ENCODE measurements at regions of chr11 and their contacts with region 1.

Region 1: GRCh38 chr11:19071255-19071654 is 10.7 kb upstream of the MRGPRX2 start:
- DNase-seq: peak; percentile 86
- H3K4me3 Mint-ChIP-seq: peak overlapping the region; percentile 52
- H3K27ac Mint-ChIP-seq: no peak overlapping the region
- H3K4me1 Mint-ChIP-seq: peaks cover 2% of the 10 kb centered on the region
- H3K27me3 Mint-ChIP-seq: peaks cover 17% of the 10 kb centered on the region

Region 2: GRCh38 chr11:19116971-19117750 is 45.9 kb after region 1 on chr11 and contains the start of gene ZDHHC13:
- intact Hi-C with region 1: loop called (anchors 1 kb)
- DNase-seq: peak; percentile 99
- H3K4me3 Mint-ChIP-seq: peak within 1 kb of the TSS; percentile 94
- H3K27ac Mint-ChIP-seq: peak within 1 kb of the TSS; percentile 93
- H3K4me1 Mint-ChIP-seq: peaks cover 43% of the 10 kb centered on the region
- H3K27me3 Mint-ChIP-seq: peaks cover 19% of the 10 kb centered on the region
- total RNA-seq, gene ZDHHC13: 24.8 and 28.1 TPM in 2 replicates

Region 3: GRCh38 chr11:19259487-19260345 is 188.5 kb after region 1 on chr11:
- intact Hi-C with region 1: loop called (anchors 5 kb)
- DNase-seq: peak; percentile 89
- H3K4me3 Mint-ChIP-seq: no peak overlapping the region
- H3K27ac Mint-ChIP-seq: no peak overlapping the region
- H3K4me1 Mint-ChIP-seq: no peaks in the 10 kb centered on the region
- H3K27me3 Mint-ChIP-seq: peaks cover 8% of the 10 kb centered on the region

Region 4: DNA sequence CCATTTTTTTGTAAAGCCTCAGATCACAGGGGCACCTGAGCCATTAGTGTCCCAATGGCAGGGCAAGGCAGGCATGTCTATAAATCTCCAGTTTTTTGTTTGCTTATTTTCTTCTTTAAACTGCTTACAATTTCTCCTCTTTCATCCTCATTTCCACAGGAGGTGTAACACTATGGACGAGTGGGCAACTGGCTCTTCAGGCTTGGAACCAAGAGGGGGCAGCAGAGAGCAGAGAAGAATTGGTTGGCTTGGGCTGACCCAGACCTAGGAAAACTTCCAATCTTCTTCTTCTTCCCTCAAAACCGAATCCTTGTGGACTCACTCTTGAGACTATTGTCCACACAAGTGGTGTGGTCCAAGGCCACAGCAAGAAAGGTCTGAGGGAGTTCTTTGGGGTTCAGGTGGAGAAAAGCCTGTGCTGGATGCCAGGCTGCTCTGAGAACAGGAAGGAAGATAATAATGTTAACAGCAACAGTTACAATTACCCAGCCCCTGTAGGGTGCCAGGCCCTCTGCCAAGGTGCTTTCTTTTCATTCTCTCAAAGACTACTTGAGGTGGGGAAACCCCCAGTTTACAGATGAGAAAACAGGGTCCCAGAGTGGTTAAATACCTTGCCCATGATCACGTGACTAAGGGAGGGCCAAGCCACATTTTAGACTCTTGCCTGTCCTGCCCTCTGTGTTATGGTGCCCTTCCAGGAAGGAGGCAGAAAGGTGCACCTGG is 240.2 kb after region 1 on chr11:
- intact Hi-C with region 1: loop called (anchors 5 kb)
- DNase-seq: peak; percentile 84
- H3K4me3 Mint-ChIP-seq: no peak overlapping the region
- H3K27ac Mint-ChIP-seq: no peak overlapping the region
- H3K4me1 Mint-ChIP-seq: no peaks in the 10 kb centered on the region
- H3K27me3 Mint-ChIP-seq: no peaks in the 10 kb centered on the region

Region 5: GRCh38 chr11:19553683-19554333 is 482.6 kb after region 1 on chr11:
- intact Hi-C with region 1: loop called (anchors 1 kb)
- DNase-seq: peak; percentile 89
- H3K4me3 Mint-ChIP-seq: no peak overlapping the region
- H3K27ac Mint-ChIP-seq: no peak overlapping the region
- H3K4me1 Mint-ChIP-seq: no peaks in the 10 kb centered on the region
- H3K27me3 Mint-ChIP-seq: no peaks in the 10 kb centered on the region